Psoas muscle (tissue), 8 donors: ENCODE measurements at regions of chr14 and their contacts with region 1.

Region 1: DNA sequence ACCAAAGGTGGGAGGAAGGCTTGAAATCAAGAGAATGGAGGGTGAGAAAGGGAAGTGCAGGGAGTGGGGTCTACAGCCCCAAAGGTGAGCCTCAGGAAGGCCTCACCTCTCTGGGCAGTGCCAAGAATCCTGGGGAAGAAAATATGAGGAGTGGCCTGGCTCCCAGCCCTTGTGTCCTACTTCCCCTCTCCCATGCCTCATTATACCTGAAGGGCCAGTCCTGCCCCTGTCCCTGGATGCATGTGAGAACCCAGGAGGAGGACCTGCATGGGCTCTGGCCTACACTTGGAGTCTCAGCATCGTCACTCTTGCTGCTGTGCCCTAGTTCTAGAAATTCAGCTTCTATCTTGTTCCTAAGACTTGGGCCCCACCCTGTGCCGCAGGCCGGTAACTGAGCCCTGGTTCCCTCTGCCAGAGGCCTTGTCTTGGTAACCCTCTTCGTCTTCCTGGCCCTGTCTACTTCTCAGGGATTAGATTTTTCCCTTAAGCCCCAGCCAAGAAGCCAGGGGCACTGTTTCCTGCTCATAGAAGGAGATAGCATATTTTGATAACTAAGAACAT is 10.9 kb upstream of the MYH7 start:
- DNase-seq: peak in 1 of 2 donors; percentile 68
- ATAC-seq: peak; percentile 68 to 76 (median 72)
- H3K4me3 ChIP-seq: no peak overlapping the region
- H3K27ac ChIP-seq: peak overlapping the region; percentile 83
- H3K4me1 ChIP-seq: peaks cover 14% of the 10 kb centered on the region
- H3K27me3 ChIP-seq: no peaks in the 10 kb centered on the region
- CTCF ChIP-seq: peak; percentile 18

Region 2: DNA sequence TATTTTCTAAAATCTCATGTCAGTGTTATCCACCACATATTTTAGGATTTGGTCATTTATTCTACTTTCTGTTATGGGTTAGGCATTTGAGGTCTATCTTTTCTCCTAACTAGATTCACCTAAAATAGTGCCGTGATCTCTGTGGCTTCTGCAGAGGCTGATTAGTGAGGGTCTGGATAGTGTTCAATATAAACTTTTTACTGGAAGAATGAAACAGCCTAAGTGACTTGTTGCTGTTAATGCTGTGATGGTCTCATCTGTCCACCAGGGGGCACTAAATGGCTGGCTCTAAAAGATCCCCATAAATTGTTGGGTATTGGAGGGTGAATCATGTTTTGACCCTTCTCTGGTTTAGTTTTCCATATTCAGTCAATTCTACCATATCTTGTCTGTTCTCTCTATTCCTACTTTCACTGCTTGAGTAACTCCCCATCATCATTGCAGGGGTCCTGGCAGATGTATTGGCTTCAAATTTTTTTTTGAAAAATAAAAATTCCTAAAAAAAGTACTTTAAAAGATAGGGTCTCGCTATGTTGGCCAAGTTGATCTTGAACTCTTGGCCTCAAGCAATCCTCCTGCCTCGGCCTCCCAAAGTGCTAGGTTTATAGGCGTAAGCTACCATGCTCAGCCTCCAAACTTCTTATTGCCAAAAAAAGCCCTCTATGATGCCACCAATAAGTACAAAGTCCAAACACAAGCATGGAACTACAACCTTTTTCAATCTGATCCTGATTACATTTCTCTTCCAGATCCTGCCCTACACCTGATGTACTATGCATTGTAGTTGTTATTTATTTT is 118.2 kb before region 1 on chr14:
- intact Hi-C with region 1: loop called (anchors 5 kb)
- DNase-seq: peak in 1 of 2 donors; percentile 47
- ATAC-seq: peak; percentile 72 to 88 (median 76)
- H3K4me3 ChIP-seq: no peak overlapping the region
- H3K27ac ChIP-seq: no peak overlapping the region
- H3K4me1 ChIP-seq: peaks cover 6% of the 10 kb centered on the region
- H3K27me3 ChIP-seq: no peaks in the 10 kb centered on the region
- CTCF ChIP-seq: peak; percentile 90

Region 3: GRCh38 chr14:23406244-23406643 is 40.1 kb before region 1 on chr14:
- intact Hi-C with region 1: loop called in 1 of 2 experiments (anchors 5 kb)
- DNase-seq: no peak
- ATAC-seq: peak in 1 of 4 donors; percentile 49
- H3K4me3 ChIP-seq: no peak overlapping the region
- H3K27ac ChIP-seq: no peak overlapping the region
- H3K4me1 ChIP-seq: no peaks in the 10 kb centered on the region
- H3K27me3 ChIP-seq: no peaks in the 10 kb centered on the region
- CTCF ChIP-seq: no peak

Region 4: GRCh38 chr14:23704890-23705289 is 258.5 kb after region 1 on chr14:
- intact Hi-C with region 1: no loop called
- DNase-seq: no peak
- ATAC-seq: no peak
- H3K4me3 ChIP-seq: no peak overlapping the region
- H3K27ac ChIP-seq: no peak overlapping the region
- H3K4me1 ChIP-seq: no peaks in the 10 kb centered on the region
- H3K27me3 ChIP-seq: peaks cover 0 to 8% (median 2%) of the 10 kb centered on the region in 3 donors
- CTCF ChIP-seq: no peak